HCT116 (cell line): ENCODE measurements at regions of chr3 and their contacts with region 1.

Region 1: DNA sequence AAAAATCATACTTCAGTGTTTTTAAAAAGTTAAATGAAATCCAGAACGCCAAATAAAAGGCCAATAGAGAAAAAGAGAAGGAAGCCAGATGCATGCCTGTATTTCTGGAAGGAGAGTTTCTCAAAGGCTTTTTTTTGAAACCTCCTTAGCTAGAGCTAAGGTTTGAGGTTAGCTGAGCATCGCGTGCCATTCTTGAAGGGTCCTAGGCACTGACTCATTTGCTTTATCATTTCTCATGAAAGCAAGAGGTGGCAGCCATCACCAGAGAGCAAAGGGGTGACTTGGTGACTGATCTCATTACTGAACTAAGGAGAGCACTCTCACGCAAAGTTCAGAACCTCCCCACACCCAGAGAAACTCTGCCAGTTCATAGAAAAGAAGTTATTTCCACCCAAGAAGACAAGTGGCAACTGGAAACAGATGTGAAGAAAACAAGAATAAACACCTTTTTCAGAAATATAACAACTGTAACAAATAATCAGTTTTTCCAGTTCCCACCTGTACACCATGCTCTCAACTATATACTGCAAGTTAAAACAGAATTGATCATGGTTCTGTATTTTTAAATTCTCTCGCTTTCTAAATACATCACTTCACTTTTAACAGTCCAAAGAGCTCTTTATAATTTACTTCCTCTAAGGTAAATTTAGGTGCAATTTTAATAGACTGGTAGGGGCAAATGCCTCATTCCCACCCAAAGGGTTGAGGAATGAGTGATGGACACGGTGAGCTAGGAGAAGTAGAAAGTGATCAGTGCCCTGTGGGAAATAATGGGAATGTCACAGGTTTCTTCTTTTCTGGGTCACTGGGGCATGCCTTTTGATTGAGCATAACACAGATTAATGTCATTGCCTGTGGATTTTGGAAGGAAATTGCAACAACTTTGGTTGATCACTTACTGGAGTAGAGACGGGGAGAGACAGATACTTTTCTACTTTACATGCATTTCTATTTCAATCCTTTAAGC is 24.7 kb downstream of the GPR15 start:
- DNase-seq: peak; percentile 93
- ATAC-seq: peak; percentile 75
- H3K4me3 ChIP-seq: peak overlapping the region; percentile 12 to 40
- H3K27ac ChIP-seq: peak overlapping the region; percentile 98
- H3K4me1 ChIP-seq: peaks cover 71 to 84% of the 10 kb centered on the region in 2 experiments
- H3K27me3 ChIP-seq: no peaks in the 10 kb centered on the region
- CTCF ChIP-seq: no peak
- POLR2A ChIP-seq: peak; percentile 34
- RAD21 ChIP-seq: 0 out of 2 replicates have a peak, but pooled peaks have one; percentile 17

Region 2: GRCh38 chr3:98483130-98483482 is 73.3 kb before region 1 on chr3:
- CTCF ChIA-PET with region 1: no interaction called
- POLR2A ChIA-PET with region 1: interaction called, 12 read pairs
- RAD21 ChIA-PET with region 1: no interaction called
- intact Hi-C with region 1: no loop called
- DNase-seq: peak; percentile 67
- ATAC-seq: peak; percentile 93
- H3K4me3 ChIP-seq: peak overlapping the region in 1 of 2 experiments; percentile 10; a peak in 1 of 4 replicates
- H3K27ac ChIP-seq: peak overlapping the region; percentile 55
- H3K4me1 ChIP-seq: peaks cover 19 to 21% of the 10 kb centered on the region in 2 experiments
- H3K27me3 ChIP-seq: no peaks in the 10 kb centered on the region
- CTCF ChIP-seq: no peak
- POLR2A ChIP-seq: no peak
- RAD21 ChIP-seq: no peak

Region 3: DNA sequence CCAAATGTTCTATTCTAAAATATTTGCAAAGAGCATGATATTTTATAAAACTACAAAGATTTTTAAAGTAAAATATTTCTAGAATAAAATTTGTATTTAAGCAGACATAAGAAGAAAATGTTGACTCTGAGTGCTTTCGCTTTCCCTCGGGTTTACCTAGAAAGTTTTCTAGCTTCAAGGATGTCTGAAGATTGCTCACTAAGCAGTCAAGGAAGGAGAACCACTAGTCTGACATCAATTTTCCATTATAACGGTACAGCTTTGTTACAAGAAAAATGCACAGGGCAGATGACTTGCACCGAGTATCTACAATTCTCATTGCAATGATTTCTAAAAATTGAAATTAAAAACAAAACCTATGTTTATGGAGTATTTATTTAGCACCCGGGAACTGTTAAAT is 10.5 kb before region 1 on chr3:
- CTCF ChIA-PET with region 1: no interaction called
- POLR2A ChIA-PET with region 1: interaction called, 19 read pairs
- RAD21 ChIA-PET with region 1: no interaction called
- intact Hi-C with region 1: no loop called
- DNase-seq: no peak
- ATAC-seq: no peak
- H3K4me3 ChIP-seq: no peak overlapping the region
- H3K27ac ChIP-seq: peak overlapping the region; percentile 45; the same call in 1 of the 2 replicates
- H3K4me1 ChIP-seq: peaks cover 49 to 77% of the 10 kb centered on the region in 2 experiments
- H3K27me3 ChIP-seq: no peaks in the 10 kb centered on the region
- CTCF ChIP-seq: no peak
- POLR2A ChIP-seq: no peak
- RAD21 ChIP-seq: no peak

Region 4: DNA sequence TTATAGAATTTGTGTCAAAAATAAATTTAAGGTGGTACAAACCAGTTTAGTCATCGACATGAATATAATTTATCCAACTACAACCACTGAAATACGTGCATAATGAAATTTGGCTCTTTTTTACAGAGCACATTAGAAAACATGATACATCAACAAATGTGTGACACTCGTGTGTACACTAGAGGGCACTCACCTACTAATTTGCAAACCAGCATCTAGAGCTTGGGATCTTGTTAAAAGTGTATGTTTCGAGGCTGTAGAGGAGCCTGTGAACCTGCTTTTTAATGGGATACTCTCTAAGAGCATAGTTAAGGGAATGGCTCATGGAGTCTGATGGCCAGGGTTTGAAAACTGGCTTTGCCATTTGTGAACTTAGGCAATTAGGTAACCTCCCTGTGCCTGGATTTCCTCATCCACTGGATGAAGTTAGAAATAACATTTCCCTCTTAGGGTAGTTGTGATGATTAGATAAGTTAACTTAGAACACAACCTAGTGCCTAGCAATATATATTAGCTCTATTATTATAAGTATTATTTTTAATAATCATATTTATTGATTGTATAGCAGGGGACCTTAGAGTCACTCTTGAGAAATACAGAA is 45.7 kb after region 1 on chr3:
- CTCF ChIA-PET with region 1: no interaction called
- POLR2A ChIA-PET with region 1: no interaction called
- RAD21 ChIA-PET with region 1: no interaction called
- intact Hi-C with region 1: no loop called
- DNase-seq: peak; percentile 71
- ATAC-seq: peak; percentile 96
- H3K4me3 ChIP-seq: no peak overlapping the region
- H3K27ac ChIP-seq: no peak overlapping the region
- H3K4me1 ChIP-seq: no peaks in the 10 kb centered on the region
- H3K27me3 ChIP-seq: no peaks in the 10 kb centered on the region
- CTCF ChIP-seq: peak; percentile 82 to 96 (median 94)
- POLR2A ChIP-seq: no peak
- RAD21 ChIP-seq: peak; percentile 97

Region 5: DNA sequence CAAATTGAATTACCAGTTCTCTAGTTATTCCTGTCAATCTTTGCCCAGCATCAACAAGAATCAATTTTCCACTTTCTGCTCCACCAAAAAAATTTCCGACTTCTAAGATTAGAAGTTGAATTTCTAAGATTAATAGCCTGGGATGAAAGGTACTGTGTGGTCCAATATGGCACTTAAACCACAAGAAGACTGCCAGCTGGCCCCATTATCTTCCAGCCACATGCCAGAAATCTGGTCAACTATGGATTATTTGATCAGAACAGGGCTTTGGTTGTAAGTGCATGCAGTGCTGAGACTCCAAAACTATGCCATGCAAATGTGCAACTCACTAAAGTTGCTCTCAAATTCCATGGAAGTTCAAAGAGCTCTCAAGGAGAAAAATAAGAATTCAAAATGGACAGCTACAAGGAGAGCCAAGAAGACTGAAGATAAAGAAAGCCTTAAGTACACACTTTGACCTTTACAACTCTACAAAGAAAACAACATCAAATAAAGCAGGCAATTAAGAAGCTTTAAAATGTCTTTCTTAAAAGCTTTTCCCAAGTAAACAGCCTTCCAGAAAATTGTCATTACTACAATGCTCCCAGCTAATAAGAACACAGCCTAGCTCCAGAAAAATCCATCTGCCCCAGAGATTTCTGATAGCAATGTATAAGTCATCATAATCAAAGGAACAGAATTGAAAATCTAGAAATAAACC is 270.9 kb after region 1 on chr3:
- CTCF ChIA-PET with region 1: no interaction called
- POLR2A ChIA-PET with region 1: no interaction called
- RAD21 ChIA-PET with region 1: no interaction called
- intact Hi-C with region 1: no loop called
- DNase-seq: no peak
- ATAC-seq: no peak
- H3K4me3 ChIP-seq: no peak overlapping the region
- H3K27ac ChIP-seq: peak overlapping the region; percentile 37; the same call in 1 of the 2 replicates
- H3K4me1 ChIP-seq: peaks cover 4 to 31% of the 10 kb centered on the region in 2 experiments; a peak in 2 of 4 replicates
- H3K27me3 ChIP-seq: no peaks in the 10 kb centered on the region
- CTCF ChIP-seq: no peak
- POLR2A ChIP-seq: no peak
- RAD21 ChIP-seq: no peak